Aorta (tissue), 5 donors: ENCODE measurements at regions of chr17 and their contacts with region 1.

Region 1: DNA sequence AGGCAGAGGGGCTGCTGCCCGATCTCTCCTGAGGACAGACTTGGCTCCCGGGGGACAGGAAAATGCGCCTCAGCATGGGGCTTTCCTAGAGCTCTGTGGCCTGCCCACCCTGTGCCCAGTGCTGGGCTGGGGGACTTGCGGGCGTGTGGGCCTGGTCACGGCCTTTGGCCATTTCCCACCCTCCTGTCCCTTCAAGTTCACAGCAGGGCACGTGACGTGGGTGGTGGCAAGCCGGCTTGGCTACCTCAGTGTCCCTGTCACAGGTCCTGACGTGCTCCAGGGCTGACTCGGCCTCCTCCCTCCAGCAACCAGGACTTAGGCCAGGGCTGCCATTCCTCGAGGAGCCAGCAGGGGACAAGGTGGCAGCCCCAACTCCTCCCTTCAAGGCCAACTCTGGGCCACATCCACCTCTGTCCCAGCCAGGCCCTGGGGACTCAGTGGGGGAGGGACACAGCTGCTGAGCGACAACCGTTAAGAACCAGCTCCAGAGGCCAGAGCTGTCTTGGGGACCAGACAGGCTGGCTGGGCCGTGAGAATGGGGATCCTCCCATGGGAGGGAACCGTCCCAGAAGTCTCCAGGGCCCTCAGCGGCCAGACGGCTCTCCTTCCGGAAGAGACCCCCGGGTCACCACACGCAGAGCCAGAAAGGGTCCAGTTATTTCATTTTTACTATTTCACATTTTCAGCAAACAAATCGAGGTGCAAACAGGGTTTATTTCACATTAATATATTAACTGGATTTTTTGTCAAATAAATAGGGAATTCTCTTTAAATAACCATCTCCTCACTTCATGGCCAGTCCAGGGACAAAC is 1.1 kb upstream of the UNC13D start:
- DNase-seq: peak; percentile 92 to 95
- ATAC-seq: peak; percentile 78
- H3K4me3 ChIP-seq: no peak overlapping the region
- H3K27ac ChIP-seq: peak overlapping the region; percentile 10 to 49
- H3K4me1 ChIP-seq: no peaks in the 10 kb centered on the region
- H3K27me3 ChIP-seq: no peaks in the 10 kb centered on the region

Region 2: GRCh38 chr17:75799398-75799797 is 45.9 kb before region 1 on chr17:
- intact Hi-C with region 1: loop called in 1 of 2 experiments (anchors 10 kb)
- DNase-seq: peak in 1 of 2 donors; percentile 38
- ATAC-seq: no peak
- H3K4me3 ChIP-seq: no peak overlapping the region
- H3K27ac ChIP-seq: no peak overlapping the region
- H3K4me1 ChIP-seq: no peaks in the 10 kb centered on the region
- H3K27me3 ChIP-seq: no peaks in the 10 kb centered on the region

Region 3: GRCh38 chr17:75896415-75897159 is 51.3 kb after region 1 on chr17 and contains the start of gene TRIM65:
- intact Hi-C with region 1: loop called in 1 of 2 experiments (anchors 5 kb)
- DNase-seq: peak; percentile 92 to 97
- ATAC-seq: peak; percentile 88
- H3K4me3 ChIP-seq: peak within 1 kb of the TSS; percentile 69 to 84
- H3K27ac ChIP-seq: peak within 1 kb of the TSS; percentile 6 to 82
- H3K4me1 ChIP-seq: no peaks in the 10 kb centered on the region
- H3K27me3 ChIP-seq: no peaks in the 10 kb centered on the region
- total RNA-seq, gene TRIM65: 15.1 to 26.6 TPM